HepG2 (cell line): ENCODE measurements at regions of chr2 and their contacts with region 1.

Region 1: DNA sequence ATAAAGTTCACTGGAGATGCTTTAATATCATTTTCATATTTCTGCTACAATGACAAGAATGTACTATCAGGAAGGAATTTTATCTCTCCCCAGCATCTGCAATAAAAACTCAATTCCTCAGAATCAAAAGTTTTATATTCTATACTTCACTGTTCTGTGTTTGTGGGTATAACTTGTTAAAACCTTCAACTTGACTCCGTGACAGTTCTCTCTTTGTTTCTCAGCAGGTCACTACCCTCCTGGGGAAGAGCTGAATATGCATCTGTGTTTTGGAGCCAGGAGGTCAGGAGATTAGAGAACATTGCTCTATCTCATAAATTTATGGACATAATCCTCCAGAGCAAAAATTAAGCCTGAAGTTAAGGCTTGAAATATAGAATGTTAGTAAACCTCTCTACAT is 411.4 kb downstream of the TRIB2 start:
- DNase-seq: no peak
- ATAC-seq: no peak
- H3K4me3 ChIP-seq: no peak overlapping the region
- H3K27ac ChIP-seq: no peak overlapping the region
- H3K4me1 ChIP-seq: no peaks in the 10 kb centered on the region
- H3K27me3 ChIP-seq: no peaks in the 10 kb centered on the region
- CTCF ChIP-seq: no peak
- EP300 ChIP-seq: no peak
- POLR2A ChIP-seq: no peak
- RAD21 ChIP-seq: no peak

Region 2: GRCh38 chr2:12931186-12931844 is 196.8 kb before region 1 on chr2:
- CTCF ChIA-PET with region 1: no interaction called
- POLR2A ChIA-PET with region 1: no interaction called
- in situ Hi-C with region 1: no loop called
- intact Hi-C with region 1: no loop called
- DNase-seq: peak; percentile 3
- ATAC-seq: peak; percentile 92
- H3K4me3 ChIP-seq: no peak overlapping the region
- H3K27ac ChIP-seq: no peak overlapping the region
- H3K4me1 ChIP-seq: no peaks in the 10 kb centered on the region
- H3K27me3 ChIP-seq: no peaks in the 10 kb centered on the region
- CTCF ChIP-seq: peak; percentile 77
- EP300 ChIP-seq: no peak
- POLR2A ChIP-seq: no peak
- RAD21 ChIP-seq: 0 out of 2 replicates have a peak, but pooled peaks have one; percentile 31

Region 3: DNA sequence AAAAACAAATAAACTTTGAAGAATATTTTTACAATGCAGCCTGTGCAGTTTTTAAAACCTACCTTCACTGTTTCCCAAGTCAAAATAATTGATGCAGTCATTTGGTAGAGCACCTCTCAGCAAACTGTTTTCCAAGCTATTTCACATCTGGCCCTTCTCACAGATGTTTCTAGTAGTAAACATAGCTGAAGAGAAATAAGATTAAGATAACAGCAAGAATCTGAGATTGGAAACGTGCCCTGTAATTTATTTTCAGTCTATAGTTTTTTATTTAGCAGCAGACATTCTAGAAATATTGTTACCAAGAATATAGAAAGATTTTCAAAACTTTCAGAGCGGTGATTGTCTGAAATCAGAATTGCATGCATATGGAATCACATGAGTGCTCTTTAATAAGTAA is 28.8 kb after region 1 on chr2:
- CTCF ChIA-PET with region 1: no interaction called
- POLR2A ChIA-PET with region 1: no interaction called
- in situ Hi-C with region 1: no loop called
- intact Hi-C with region 1: loop called (anchors 2 kb)
- DNase-seq: no peak
- ATAC-seq: no peak
- H3K4me3 ChIP-seq: no peak overlapping the region
- H3K27ac ChIP-seq: no peak overlapping the region
- H3K4me1 ChIP-seq: no peaks in the 10 kb centered on the region
- H3K27me3 ChIP-seq: no peaks in the 10 kb centered on the region
- CTCF ChIP-seq: no peak
- EP300 ChIP-seq: no peak
- POLR2A ChIP-seq: no peak
- RAD21 ChIP-seq: no peak